ENCODE measurements at regions of chr15 and their contacts with region 1.

Region 1: DNA sequence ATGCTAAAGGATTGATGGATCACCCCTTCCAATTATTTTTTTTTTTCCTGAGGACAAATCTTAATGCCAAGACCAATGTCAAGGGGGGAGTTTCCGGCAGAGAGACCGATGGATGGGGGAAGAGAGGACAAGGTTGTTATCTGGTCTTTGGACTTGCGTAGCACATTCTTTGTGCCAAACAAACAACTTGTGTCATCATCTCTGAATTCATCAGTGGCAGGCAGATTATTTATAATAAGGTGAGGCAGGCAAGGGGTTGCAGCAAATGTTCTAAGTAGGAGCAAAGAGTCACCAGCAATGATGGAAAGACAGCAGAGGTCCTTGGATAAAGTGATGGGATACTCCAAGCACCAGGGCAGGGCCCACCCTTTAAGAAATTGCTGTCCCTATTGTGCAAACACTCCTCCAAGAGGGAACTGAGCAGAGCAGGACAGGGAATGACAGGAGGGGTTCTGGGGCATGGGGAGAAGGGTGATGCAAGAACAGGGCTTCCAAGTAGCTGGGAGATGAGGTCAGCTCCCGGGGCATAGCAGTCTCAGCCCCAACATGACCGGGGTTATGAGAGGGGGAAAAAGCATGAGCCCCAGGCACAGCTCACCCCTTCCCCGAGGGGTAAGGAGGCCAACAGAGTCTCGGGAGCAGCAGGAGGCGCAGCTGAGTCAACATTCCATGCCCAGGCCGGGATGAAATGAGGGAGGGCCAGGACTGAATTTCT is 57.4 kb downstream of the ANXA2 start:
- DNase-seq: peak in 1 of 4 experiments; percentile 12
- ATAC-seq: peak; percentile 69
- H3K4me3 ChIP-seq: no peak overlapping the region
- H3K27ac ChIP-seq: no peak overlapping the region
- H3K4me1 ChIP-seq: no peaks in the 10 kb centered on the region
- H3K27me3 ChIP-seq: peaks cover 17 to 23% of the 10 kb centered on the region in 2 experiments; a peak in 4 of 5 replicates
- CTCF ChIP-seq: peak in 2 of 3 experiments; percentile 46 to 53; a peak in 4 of 6 replicates
- EP300 ChIP-seq: no peak
- POLR2A ChIP-seq: no peak
- RAD21 ChIP-seq: peak in 1 of 2 experiments; percentile 53; a peak in 2 of 4 replicates

Region 2: GRCh38 chr15:60162241-60162967 is 178.0 kb before region 1 on chr15:
- CTCF ChIA-PET with region 1: no interaction called
- POLR2A ChIA-PET with region 1: no interaction called
- in situ Hi-C with region 1: no loop called
- intact Hi-C with region 1: no loop called
- DNase-seq: no peak
- ATAC-seq: no peak
- H3K4me3 ChIP-seq: no peak overlapping the region
- H3K27ac ChIP-seq: no peak overlapping the region
- H3K4me1 ChIP-seq: no peaks in the 10 kb centered on the region
- H3K27me3 ChIP-seq: peaks cover 4 to 6% of the 10 kb centered on the region in 2 experiments; a peak in 2 of 5 replicates
- CTCF ChIP-seq: no peak
- EP300 ChIP-seq: no peak
- POLR2A ChIP-seq: no peak
- RAD21 ChIP-seq: no peak

Region 3: DNA sequence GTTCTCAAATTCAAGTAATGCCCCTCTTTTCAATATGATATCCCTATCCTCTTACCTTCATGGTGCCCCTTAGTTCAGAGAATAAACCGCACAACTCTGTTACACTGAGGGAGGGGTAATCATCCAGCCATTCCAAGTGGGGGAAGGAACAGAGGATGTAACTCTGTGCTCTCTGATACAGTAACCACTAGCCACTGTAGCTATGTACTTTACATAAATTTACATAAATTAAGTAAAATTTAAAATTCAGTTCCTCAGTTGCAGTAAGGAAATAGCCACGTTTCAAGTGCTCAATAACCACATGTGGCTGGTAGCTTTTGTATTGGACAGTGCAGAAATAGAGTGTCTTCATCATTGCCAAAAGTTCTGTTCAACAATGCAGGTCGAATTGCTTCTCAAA is 33.3 kb before region 1 on chr15:
- CTCF ChIA-PET with region 1: no interaction called
- POLR2A ChIA-PET with region 1: no interaction called
- in situ Hi-C with region 1: no loop called
- intact Hi-C with region 1: no loop called
- DNase-seq: no peak
- ATAC-seq: no peak
- H3K4me3 ChIP-seq: no peak overlapping the region
- H3K27ac ChIP-seq: no peak overlapping the region
- H3K4me1 ChIP-seq: no peaks in the 10 kb centered on the region; a peak in 1 of 5 replicates
- H3K27me3 ChIP-seq: 0 out of 5 replicates have a peak, but pooled peaks cover 0 to 2% of the 10 kb centered on the region in 2 experiments
- CTCF ChIP-seq: no peak
- EP300 ChIP-seq: no peak
- POLR2A ChIP-seq: no peak
- RAD21 ChIP-seq: no peak

Region 4: GRCh38 chr15:60520825-60521368 is 180.5 kb after region 1 on chr15:
- CTCF ChIA-PET with region 1: interaction called, 3 read pairs
- POLR2A ChIA-PET with region 1: interaction called, 7 read pairs
- in situ Hi-C with region 1: no loop called
- intact Hi-C with region 1: loop called (anchors 5 kb)
- DNase-seq: peak; percentile 52 to 80 (median 54)
- ATAC-seq: peak; percentile 91
- H3K4me3 ChIP-seq: no peak overlapping the region
- H3K27ac ChIP-seq: no peak overlapping the region
- H3K4me1 ChIP-seq: no peaks in the 10 kb centered on the region
- H3K27me3 ChIP-seq: peaks cover 2 to 6% of the 10 kb centered on the region in 2 experiments; a peak in 3 of 5 replicates
- CTCF ChIP-seq: peak; percentile 80 to 94 (median 87)
- EP300 ChIP-seq: no peak
- POLR2A ChIP-seq: no peak
- RAD21 ChIP-seq: peak; percentile 86 to 89

Region 5: DNA sequence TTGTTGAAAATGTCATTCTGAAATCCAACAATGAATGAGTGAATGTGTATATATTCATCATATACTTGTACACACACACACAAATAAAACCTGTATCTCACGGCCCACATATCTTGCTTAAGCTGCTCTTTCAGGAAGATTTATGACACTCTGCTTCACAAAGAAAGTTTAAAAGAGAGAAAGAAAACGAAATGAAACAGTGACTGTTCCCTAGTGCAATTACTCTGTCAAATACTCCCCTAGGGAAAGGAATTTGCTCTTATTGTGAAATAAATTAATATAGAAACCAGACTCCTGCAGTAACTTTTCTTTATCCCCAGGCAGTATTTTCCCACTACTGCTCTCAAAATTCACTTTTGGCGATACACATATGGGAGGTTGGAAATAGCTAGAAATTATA is 1390.7 kb after region 1 on chr15:
- CTCF ChIA-PET with region 1: no interaction called
- POLR2A ChIA-PET with region 1: no interaction called
- in situ Hi-C with region 1: no loop called
- intact Hi-C with region 1: no loop called
- DNase-seq: no peak
- ATAC-seq: no peak
- H3K4me3 ChIP-seq: no peak overlapping the region
- H3K27ac ChIP-seq: no peak overlapping the region
- H3K4me1 ChIP-seq: no peaks in the 10 kb centered on the region
- H3K27me3 ChIP-seq: no peaks in the 10 kb centered on the region
- CTCF ChIP-seq: no peak
- EP300 ChIP-seq: no peak
- POLR2A ChIP-seq: no peak
- RAD21 ChIP-seq: no peak